ENCODE measurements at regions of chr1 and their contacts with region 1.

Region 1: GRCh38 chr1:244665771-244666217 is 12.9 kb downstream of the DESI2 start:
- DNase-seq: no peak
- H3K4me3 ChIP-seq: no peak overlapping the region
- H3K27ac ChIP-seq: no peak overlapping the region
- H3K4me1 ChIP-seq: peaks cover 1% of the 10 kb centered on the region
- H3K27me3 ChIP-seq: no peaks in the 10 kb centered on the region
- CTCF ChIP-seq: no peak
- EP300 ChIP-seq: no peak
- POLR2A ChIP-seq: no peak

Region 2: DNA sequence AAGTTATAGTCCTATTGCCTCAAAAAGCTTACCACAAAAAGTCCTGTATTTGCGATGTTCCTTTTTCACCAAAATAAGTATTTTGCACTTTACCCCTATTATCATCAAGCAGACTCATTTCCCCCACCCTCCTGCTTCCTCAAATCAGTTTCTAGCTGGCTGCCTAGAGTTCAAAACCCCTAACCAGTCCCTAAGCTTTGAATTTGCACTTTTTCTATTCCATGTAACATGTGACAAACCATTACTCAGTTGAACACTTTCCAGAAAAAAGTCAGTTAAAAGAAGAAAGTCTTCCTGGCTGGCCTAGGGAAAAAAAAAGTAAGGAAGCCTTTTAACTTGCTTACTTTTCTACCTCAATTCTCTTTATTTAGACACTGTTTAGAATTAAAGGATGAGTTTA is 1418.9 kb before region 1 on chr1:
- intact Hi-C with region 1: loop called in 1 of 4 experiments (anchors 5 kb)
- DNase-seq: no peak
- H3K4me3 ChIP-seq: no peak overlapping the region
- H3K27ac ChIP-seq: no peak overlapping the region
- H3K4me1 ChIP-seq: peaks cover 5% of the 10 kb centered on the region
- H3K27me3 ChIP-seq: no peaks in the 10 kb centered on the region
- CTCF ChIP-seq: no peak
- EP300 ChIP-seq: no peak
- POLR2A ChIP-seq: no peak